ENCODE measurements at regions of chr2 and their contacts with region 1.

Region 1: DNA sequence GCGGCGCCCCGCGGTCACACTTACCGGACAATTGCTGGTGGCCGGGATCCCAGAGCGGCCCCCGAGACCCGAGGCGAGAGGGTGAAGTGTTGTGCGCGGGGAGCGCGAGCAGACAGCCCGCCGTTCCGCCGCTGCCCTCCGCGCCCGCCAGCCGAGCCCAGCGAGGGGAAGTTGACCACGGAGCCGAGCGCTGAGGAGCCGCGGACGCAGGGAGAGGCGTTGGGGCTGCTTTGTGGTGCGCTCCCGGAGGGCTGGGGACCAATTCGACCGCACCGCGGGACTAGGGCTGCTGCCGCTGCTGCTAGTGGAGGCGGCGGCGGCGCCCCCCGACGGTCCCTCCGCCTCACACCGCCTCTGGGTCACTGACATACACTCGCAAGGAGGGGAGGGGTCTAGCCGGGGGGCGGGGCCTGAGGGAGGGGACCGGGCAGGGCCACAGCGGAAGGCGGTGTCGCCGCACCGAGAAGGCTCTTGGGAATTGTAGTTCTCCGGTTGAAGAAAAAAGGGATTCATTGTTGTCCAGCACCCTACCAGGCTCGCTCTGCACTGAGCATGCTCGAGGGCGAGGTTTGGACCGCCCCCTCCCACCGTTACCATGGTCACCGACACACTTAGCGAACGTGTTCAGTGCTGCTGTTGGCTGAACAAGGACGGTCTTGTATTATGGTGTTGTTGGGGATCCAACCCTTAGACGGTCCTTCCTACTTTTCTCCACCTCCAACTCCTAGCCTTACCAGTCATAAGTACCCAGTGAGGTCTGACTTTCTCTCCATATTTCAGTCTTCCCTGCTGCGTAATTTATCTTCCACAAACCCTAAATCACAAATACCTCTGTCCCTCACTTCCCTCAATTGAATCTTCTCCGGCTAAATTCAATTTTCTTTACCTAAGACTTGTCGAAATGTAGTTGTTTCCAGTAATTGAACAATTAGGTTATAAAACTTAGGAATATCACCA is at the start of gene PELI1:
- DNase-seq: peak; percentile 95
- ATAC-seq: peak; percentile 94
- H3K4me3 Mint-ChIP-seq: peak within 1 kb of the TSS; percentile 96
- H3K27ac Mint-ChIP-seq: peak within 1 kb of the TSS; percentile 96
- H3K4me1 Mint-ChIP-seq: peaks cover 23% of the 10 kb centered on the region
- H3K27me3 Mint-ChIP-seq: no peaks in the 10 kb centered on the region
- CTCF ChIP-seq: no peak
- total RNA-seq, gene PELI1: 29.8 to 39.2 TPM

Region 2: DNA sequence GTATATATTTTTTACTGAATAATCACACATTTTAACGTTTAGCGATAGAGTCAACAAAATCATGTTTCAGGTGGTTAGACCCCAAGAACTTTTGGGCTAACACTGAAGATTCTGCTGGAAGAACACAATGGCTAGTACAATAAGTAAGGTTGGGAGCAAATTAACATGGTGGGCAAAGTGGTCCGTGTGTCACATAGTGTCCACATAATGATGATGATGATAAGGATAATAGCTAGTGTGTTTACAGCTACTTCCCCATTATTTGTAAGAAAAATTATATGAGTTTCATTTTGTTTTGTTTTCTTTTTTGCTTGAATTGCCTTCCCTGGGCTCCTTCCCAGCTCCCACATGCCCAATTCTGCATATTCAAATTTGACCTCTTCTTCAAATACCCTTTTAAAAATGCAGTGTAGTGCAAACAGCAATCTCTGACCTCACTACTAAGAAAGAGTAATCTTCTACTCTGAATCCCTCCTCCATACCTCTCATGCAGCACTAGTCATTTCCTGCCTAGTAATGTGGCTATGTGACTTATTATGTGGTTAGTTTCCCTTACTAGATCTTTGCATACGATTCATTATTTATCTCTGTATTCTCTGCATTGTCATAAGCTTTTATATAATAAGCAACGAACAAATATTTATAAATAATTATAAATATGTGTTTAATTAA is 108.2 kb before region 1 on chr2:
- CTCF ChIA-PET with region 1: no interaction called
- POLR2A ChIA-PET with region 1: interaction called, 4 read pairs
- intact Hi-C with region 1: loop called (anchors 5 kb)
- DNase-seq: peak; percentile 47
- ATAC-seq: peak; percentile 93
- H3K4me3 Mint-ChIP-seq: peak overlapping the region; percentile 47
- H3K27ac Mint-ChIP-seq: peak overlapping the region; percentile 84
- H3K4me1 Mint-ChIP-seq: peaks cover 44% of the 10 kb centered on the region
- H3K27me3 Mint-ChIP-seq: no peaks in the 10 kb centered on the region
- CTCF ChIP-seq: no peak

Region 3: GRCh38 chr2:64052468-64053241 is 91.7 kb before region 1 on chr2:
- CTCF ChIA-PET with region 1: interaction called, 6 read pairs
- POLR2A ChIA-PET with region 1: interaction called, 4 read pairs
- intact Hi-C with region 1: loop called (anchors 5 kb)
- DNase-seq: no peak
- ATAC-seq: no peak
- H3K4me3 Mint-ChIP-seq: no peak overlapping the region
- H3K27ac Mint-ChIP-seq: no peak overlapping the region
- H3K4me1 Mint-ChIP-seq: peaks cover 40% of the 10 kb centered on the region
- H3K27me3 Mint-ChIP-seq: no peaks in the 10 kb centered on the region
- CTCF ChIP-seq: no peak

Region 4: GRCh38 chr2:64101141-64101591 is 43.2 kb before region 1 on chr2:
- CTCF ChIA-PET with region 1: interaction called, 3 read pairs
- POLR2A ChIA-PET with region 1: interaction called, 4 read pairs
- intact Hi-C with region 1: loop called (anchors 5 kb)
- DNase-seq: no peak
- ATAC-seq: peak; percentile 80
- H3K4me3 Mint-ChIP-seq: peak overlapping the region; percentile 42
- H3K27ac Mint-ChIP-seq: peak overlapping the region; percentile 86
- H3K4me1 Mint-ChIP-seq: peaks cover 56% of the 10 kb centered on the region
- H3K27me3 Mint-ChIP-seq: no peaks in the 10 kb centered on the region
- CTCF ChIP-seq: no peak

Region 5: DNA sequence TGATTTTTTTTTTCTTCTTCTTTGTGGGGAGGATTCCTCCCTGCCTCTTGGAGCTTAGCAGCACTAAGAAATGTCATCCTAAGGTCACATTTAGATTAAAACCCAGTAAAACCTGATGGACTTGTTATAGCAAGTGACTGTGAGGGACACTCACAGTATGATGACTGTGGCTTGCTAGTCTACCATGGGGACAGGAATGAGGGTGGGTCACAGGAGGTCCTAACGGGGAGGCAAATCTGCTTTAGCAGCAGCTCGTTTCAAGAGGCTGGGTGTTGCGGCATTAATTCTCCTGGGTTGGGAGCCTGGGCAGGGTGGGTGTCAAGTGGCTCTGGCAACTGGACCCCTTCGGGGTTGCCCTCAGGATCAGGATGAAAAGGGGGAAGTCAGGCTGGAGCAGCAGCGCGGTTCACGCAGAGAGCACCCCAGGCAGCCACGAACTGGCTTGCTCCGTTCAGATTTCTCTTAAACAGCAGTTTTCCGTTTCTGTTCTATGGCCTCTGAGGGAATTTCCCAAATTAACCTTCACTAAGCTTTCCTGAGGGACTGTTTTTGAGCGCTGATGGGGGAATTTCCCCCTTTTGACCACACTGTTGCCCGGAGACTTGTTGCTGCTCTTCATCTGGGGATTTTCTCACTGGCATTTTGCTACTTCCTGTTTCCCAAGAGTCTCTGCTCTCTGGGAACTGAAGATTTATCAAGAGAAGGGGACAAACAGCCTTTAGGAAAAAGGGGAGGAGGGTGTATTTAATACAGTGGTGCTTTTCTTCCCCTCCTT is 59.7 kb after region 1 on chr2:
- CTCF ChIA-PET with region 1: no interaction called
- POLR2A ChIA-PET with region 1: interaction called, 15 read pairs
- intact Hi-C with region 1: no loop called
- DNase-seq: peak; percentile 63
- ATAC-seq: peak; percentile 46
- H3K4me3 Mint-ChIP-seq: peak overlapping the region; percentile 64
- H3K27ac Mint-ChIP-seq: peak overlapping the region; percentile 92
- H3K4me1 Mint-ChIP-seq: peaks cover 71% of the 10 kb centered on the region
- H3K27me3 Mint-ChIP-seq: no peaks in the 10 kb centered on the region
- CTCF ChIP-seq: no peak

Region 6: DNA sequence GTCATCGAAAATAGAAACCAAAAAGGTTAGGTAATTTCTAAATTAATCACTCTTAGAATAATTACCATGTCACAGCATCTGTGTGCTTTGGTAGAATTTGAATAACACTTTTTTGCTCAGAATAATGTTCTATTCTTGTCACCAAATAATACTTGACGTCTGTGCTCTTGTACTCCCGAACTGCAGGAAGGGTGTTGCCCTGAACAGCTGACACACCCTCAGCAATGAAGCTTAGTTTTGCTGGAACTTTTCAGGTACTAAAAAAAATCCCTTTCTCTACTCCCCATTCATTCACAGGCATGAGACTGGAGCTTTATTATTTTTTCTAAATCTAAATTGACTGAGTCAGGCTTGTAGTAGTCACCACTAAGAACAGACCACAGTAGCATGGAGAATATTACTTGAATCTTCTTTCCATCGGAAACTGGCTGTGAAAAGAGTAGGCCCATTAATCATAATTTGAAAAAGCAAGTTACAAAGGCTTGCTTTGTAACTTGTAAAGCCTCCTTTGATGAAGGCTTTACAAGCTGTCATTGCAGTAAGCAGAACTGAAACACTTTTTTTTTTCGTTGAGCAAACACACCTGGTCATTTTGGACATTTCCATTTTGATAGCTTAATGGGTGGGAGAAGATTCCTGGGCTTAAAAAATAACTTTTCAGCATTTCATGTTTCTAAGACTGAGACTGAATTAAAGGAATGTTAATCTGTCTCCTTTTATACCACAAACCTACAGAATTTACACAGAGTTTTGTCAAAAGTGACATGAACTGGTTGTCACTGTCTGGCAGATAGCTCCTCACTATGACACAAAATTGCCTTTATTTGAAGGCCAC is 70.2 kb after region 1 on chr2:
- CTCF ChIA-PET with region 1: no interaction called
- POLR2A ChIA-PET with region 1: interaction called, 11 read pairs
- intact Hi-C with region 1: no loop called
- DNase-seq: peak; percentile 45
- ATAC-seq: peak; percentile 67
- H3K4me3 Mint-ChIP-seq: peak overlapping the region; percentile 63
- H3K27ac Mint-ChIP-seq: peak overlapping the region; percentile 97
- H3K4me1 Mint-ChIP-seq: peaks cover 55% of the 10 kb centered on the region
- H3K27me3 Mint-ChIP-seq: no peaks in the 10 kb centered on the region
- CTCF ChIP-seq: no peak